Activated CD4-positive, alpha-beta memory T cell treated with anti-CD3 and anti-CD28 coated beads for 36 hours (primary cell): ENCODE measurements at regions of chr11 and their contacts with region 1.

Region 1: GRCh38 chr11:78139422-78140391 is at the start of gene ALG8:
- DNase-seq: peak; percentile 98
- H3K4me3 Mint-ChIP-seq: peak within 1 kb of the TSS; percentile 81
- H3K27ac Mint-ChIP-seq: peak within 1 kb of the TSS; percentile 93
- H3K4me1 Mint-ChIP-seq: peaks cover 34% of the 10 kb centered on the region
- H3K27me3 Mint-ChIP-seq: no peaks in the 10 kb centered on the region
- total RNA-seq, gene ALG8: 45.8 to 45.9 TPM

Region 2: GRCh38 chr11:78011301-78011700 is 128.4 kb before region 1 on chr11:
- CTCF ChIA-PET with region 1: no interaction called
- POLR2A ChIA-PET with region 1: no interaction called
- intact Hi-C with region 1: no loop called
- DNase-seq: no peak
- H3K4me3 Mint-ChIP-seq: no peak overlapping the region
- H3K27ac Mint-ChIP-seq: no peak overlapping the region
- H3K4me1 Mint-ChIP-seq: no peaks in the 10 kb centered on the region
- H3K27me3 Mint-ChIP-seq: no peaks in the 10 kb centered on the region

Region 3: DNA sequence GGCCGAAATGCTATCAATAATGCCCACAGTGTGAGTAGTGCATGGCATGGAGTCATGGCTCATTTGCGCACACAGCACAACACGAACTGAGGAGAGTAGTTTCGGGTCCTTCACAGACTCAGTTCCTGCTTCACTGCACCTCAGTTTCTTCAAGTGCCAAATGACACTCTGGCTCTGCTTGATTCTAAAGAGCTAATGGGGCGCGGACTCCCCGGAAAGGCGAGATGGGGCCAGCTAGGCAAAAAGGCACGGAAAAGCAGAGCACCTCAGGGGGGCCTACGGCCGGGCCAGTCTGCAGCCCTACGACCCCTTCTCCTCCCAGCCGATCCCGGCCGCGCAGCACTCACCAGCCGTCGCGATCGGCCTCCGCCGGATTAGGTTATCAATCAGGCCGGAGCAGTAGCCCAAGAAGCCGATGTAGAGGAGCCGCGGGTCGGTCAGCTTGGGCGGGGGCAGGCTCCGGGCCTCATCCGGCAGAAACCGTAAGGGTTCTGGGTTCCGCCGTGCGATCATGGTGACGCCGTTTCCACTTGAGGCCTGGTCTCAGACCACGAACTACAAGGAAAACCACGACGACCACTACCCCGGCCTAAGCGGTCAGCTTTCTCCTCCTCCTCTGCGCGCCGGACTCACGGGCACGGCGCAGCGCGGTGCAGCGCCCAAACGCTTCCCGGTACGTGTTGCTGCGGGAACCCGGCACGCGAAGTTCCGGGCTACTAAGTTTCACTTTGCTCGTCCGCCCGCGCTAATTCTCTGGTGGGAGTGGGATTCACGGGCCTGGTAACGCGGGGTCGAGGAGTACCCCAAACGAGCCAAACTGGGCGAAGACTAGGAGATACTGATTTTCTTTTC is 60.2 kb before region 1 on chr11 and contains the start of gene NDUFC2:
- CTCF ChIA-PET with region 1: no interaction called
- POLR2A ChIA-PET with region 1: interaction called, 8 read pairs
- intact Hi-C with region 1: loop called (anchors 2 kb)
- DNase-seq: peak; percentile 77
- H3K4me3 Mint-ChIP-seq: peak within 1 kb of the TSS; percentile 91
- H3K27ac Mint-ChIP-seq: peak within 1 kb of the TSS; percentile 83
- H3K4me1 Mint-ChIP-seq: peaks cover 40% of the 10 kb centered on the region
- H3K27me3 Mint-ChIP-seq: no peaks in the 10 kb centered on the region
- total RNA-seq, gene NDUFC2: 209 to 230 TPM

Region 4: GRCh38 chr11:78202733-78203167 is 63.0 kb after region 1 on chr11:
- CTCF ChIA-PET with region 1: interaction called, 3 read pairs
- POLR2A ChIA-PET with region 1: no interaction called
- intact Hi-C with region 1: loop called (anchors 5 kb)
- DNase-seq: peak; percentile 69
- H3K4me3 Mint-ChIP-seq: peak overlapping the region; percentile 63
- H3K27ac Mint-ChIP-seq: peak overlapping the region; percentile 90
- H3K4me1 Mint-ChIP-seq: peaks cover 37% of the 10 kb centered on the region
- H3K27me3 Mint-ChIP-seq: no peaks in the 10 kb centered on the region

Region 5: GRCh38 chr11:78295991-78296935 is 156.6 kb after region 1 on chr11:
- CTCF ChIA-PET with region 1: no interaction called
- POLR2A ChIA-PET with region 1: no interaction called
- intact Hi-C with region 1: no loop called
- DNase-seq: no peak
- H3K4me3 Mint-ChIP-seq: no peak overlapping the region
- H3K27ac Mint-ChIP-seq: no peak overlapping the region
- H3K4me1 Mint-ChIP-seq: peaks cover 33% of the 10 kb centered on the region
- H3K27me3 Mint-ChIP-seq: no peaks in the 10 kb centered on the region

Region 6: GRCh38 chr11:78310500-78310909 is 170.8 kb after region 1 on chr11:
- CTCF ChIA-PET with region 1: no interaction called
- POLR2A ChIA-PET with region 1: no interaction called
- intact Hi-C with region 1: no loop called
- DNase-seq: no peak
- H3K4me3 Mint-ChIP-seq: no peak overlapping the region
- H3K27ac Mint-ChIP-seq: no peak overlapping the region
- H3K4me1 Mint-ChIP-seq: peaks cover 13% of the 10 kb centered on the region
- H3K27me3 Mint-ChIP-seq: no peaks in the 10 kb centered on the region

Region 7: GRCh38 chr11:78350646-78351165 is 211.0 kb after region 1 on chr11:
- CTCF ChIA-PET with region 1: no interaction called
- POLR2A ChIA-PET with region 1: no interaction called
- intact Hi-C with region 1: no loop called
- DNase-seq: no peak
- H3K4me3 Mint-ChIP-seq: no peak overlapping the region
- H3K27ac Mint-ChIP-seq: no peak overlapping the region
- H3K4me1 Mint-ChIP-seq: peaks cover 17% of the 10 kb centered on the region
- H3K27me3 Mint-ChIP-seq: peaks cover 1% of the 10 kb centered on the region

Region 8: GRCh38 chr11:78574386-78575381 is 435.0 kb after region 1 on chr11 and contains the start of gene NARS2:
- CTCF ChIA-PET with region 1: interaction called, 3 read pairs
- POLR2A ChIA-PET with region 1: no interaction called
- intact Hi-C with region 1: loop called (anchors 5 kb)
- DNase-seq: peak; percentile 99
- H3K4me3 Mint-ChIP-seq: peak within 1 kb of the TSS; percentile 96
- H3K27ac Mint-ChIP-seq: peak within 1 kb of the TSS; percentile 92
- H3K4me1 Mint-ChIP-seq: peaks cover 21% of the 10 kb centered on the region
- H3K27me3 Mint-ChIP-seq: no peaks in the 10 kb centered on the region
- total RNA-seq, gene NARS2: 22.7 to 24.6 TPM